Posterior vena cava (tissue), 2 donors: ENCODE measurements at regions of chr3 and their contacts with region 1.

Region 1: GRCh38 chr3:105214575-105214974 is 152.1 kb upstream of the ALCAM start:
- DNase-seq: no peak

Region 2: GRCh38 chr3:104257486-104257885 is 957.1 kb before region 1 on chr3:
- intact Hi-C with region 1: loop called in 1 of 2 experiments (anchors 5 kb)
- DNase-seq: no peak

Region 3: DNA sequence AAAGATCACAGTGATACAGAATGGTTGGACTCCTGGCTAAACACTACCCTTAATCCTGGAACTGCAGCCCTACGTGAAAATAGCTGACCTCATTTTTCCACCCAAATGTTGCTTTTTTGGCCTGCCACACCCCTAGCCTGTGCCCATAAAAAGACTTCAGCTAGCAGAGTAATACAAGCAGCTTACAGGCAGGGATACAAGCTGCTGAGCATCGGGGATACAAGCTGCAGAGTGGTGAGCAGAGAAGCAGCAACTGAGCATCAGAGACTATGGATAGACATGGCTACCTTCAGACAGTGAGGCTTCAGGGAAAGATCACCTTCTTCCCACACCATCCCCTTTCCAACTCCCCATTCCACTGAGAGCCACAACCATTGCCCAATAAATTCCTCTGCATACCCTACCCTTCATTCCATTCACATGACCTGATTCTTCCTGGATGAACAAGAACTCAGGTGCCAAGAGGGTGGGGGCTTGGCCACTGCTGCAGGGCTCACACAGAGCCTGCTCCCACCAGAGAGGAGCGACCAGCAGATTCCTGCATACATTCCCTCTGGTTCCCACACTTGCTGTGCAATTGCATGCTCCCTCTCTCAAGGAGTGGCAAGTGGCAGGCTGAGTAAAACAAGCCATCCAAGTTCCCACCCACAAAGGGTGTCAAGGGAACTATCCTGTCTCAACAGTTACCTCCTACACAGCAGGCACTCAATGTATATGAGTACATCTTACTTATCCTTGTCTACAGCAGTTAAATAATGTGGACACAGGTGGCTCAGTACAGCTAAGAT is 369.6 kb after region 1 on chr3:
- intact Hi-C with region 1: no loop called
- DNase-seq: no peak